ENCODE measurements at regions of chr16 and their contacts with region 1.

Region 1: GRCh38 chr16:22684574-22685458 is 129.1 kb upstream of the HS3ST2 start:
- DNase-seq: peak in 1 of 2 donors; percentile 64
- H3K4me3 ChIP-seq: no peak overlapping the region
- H3K27ac ChIP-seq: peak overlapping the region; percentile 67 to 71
- H3K4me1 ChIP-seq: peaks cover 7 to 16% of the 10 kb centered on the region in 2 donors
- H3K27me3 ChIP-seq: no peaks in the 10 kb centered on the region
- CTCF ChIP-seq: no peak

Region 2: DNA sequence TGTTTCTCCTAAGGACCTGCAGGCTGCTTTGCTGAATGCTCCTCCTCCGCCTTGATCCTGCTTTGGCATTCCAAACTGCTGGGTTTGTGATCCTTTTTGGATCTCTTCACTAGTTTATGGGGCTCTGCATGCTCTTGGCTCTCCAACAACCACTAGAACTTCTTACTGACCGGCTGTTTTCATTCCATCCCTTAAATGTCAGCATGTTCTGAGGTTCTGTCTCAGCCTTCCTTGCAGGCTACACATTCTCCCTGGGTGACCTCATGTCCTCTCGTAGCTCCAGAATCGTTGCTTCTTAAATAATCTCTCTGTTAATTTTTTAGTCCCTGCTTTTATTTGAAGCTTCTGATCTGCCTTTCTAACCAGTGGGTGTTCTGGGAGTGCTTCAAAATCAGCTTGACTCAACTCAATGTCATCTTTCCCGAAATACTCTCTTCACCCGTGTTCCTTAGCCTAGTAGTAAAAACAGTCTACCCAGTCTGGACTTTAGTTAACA is 10.1 kb after region 1 on chr16:
- intact Hi-C with region 1: loop called (anchors 1 kb)
- DNase-seq: peak in 1 of 2 donors; percentile 91
- H3K4me3 ChIP-seq: peak overlapping the region in 1 of 2 donors; percentile 32
- H3K27ac ChIP-seq: peak overlapping the region; percentile 81 to 91
- H3K4me1 ChIP-seq: peaks cover 0 to 23% of the 10 kb centered on the region in 2 donors
- H3K27me3 ChIP-seq: no peaks in the 10 kb centered on the region
- CTCF ChIP-seq: no peak

Region 3: GRCh38 chr16:22813223-22813945 is 128.6 kb after region 1 on chr16:
- intact Hi-C with region 1: loop called (anchors 1 kb)
- DNase-seq: peak in 1 of 2 donors; percentile 74
- H3K4me3 ChIP-seq: peak overlapping the region; percentile 58 to 70
- H3K27ac ChIP-seq: peak overlapping the region; percentile 31 to 61
- H3K4me1 ChIP-seq: no peaks in the 10 kb centered on the region
- H3K27me3 ChIP-seq: no peaks in the 10 kb centered on the region
- CTCF ChIP-seq: peak; percentile 62 to 74 (median 66)